Esophagus muscularis mucosa (tissue), 4 donors: ENCODE measurements at regions of chr2 and their contacts with region 1.

Region 1: DNA sequence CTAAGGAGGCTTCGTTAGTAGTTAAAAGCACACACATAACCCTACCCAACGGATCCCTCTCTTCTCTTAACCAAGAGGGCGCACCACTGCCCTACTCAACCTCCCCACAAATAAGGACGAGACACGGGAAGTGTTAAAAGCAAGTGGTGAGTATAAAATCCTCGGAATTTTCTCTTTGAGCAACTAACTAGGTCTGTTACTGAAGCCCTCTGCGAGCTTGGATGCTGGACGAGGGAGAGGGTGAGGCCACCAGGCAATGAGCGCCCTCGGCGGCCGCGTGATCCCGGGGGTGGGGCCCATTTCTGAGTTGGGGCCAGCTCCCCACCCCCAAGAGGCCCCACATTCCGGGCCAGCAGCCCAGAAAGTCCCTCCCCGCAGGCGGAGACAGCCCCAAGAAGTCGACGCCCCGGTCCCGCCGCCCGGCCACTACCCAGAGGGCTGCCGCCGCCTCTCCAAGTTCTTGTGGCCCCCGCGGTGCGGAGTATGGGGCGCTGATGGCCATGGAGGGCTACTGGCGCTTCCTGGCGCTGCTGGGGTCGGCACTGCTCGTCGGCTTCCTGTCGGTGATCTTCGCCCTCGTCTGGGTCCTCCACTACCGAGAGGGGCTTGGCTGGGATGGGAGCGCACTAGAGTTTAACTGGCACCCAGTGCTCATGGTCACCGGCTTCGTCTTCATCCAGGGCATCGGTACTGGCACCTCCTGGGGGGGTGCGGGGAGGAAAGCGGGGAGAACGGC is at the start of gene CYBRD1:
- DNase-seq: peak; percentile 95
- H3K4me3 ChIP-seq: peak within 1 kb of the TSS; percentile 84 to 98 (median 93)
- H3K27ac ChIP-seq: peak within 1 kb of the TSS; percentile 88 to 94 (median 92)
- H3K4me1 ChIP-seq: peaks cover 12 to 43% (median 29%) of the 10 kb centered on the region in 4 donors
- H3K27me3 ChIP-seq: no peaks in the 10 kb centered on the region
- CTCF ChIP-seq: no peak
- EP300 ChIP-seq: no peak
- POLR2A ChIP-seq: peak; percentile 60
- total RNA-seq, gene CYBRD1: 133 to 281 (median 197) TPM

Region 2: DNA sequence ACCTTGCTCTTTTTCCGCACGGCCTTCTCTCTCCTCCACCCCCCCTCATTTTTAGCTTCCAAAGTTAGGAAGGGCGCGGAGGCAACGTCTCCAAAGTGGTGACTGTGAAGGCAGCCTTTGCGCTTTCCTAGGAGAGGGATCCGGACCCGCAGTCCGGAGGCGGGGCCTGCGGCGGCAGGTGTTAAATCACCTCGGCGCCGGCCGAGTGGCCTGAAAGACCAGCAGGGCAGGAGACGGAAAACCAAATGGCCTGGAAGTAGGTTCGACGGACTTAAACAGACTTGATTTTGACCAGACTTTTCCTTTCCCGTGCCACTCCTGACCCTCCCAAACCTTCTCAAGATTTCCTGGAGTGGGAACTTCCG is 592.6 kb before region 1 on chr2:
- intact Hi-C with region 1: loop called (anchors 5 kb)
- DNase-seq: peak; percentile 92
- H3K4me3 ChIP-seq: peak overlapping the region; percentile 67 to 93 (median 90)
- H3K27ac ChIP-seq: peak overlapping the region; percentile 94 to 97 (median 95)
- H3K4me1 ChIP-seq: peaks cover 22 to 39% (median 38%) of the 10 kb centered on the region in 4 donors
- H3K27me3 ChIP-seq: no peaks in the 10 kb centered on the region
- CTCF ChIP-seq: no peak
- EP300 ChIP-seq: no peak
- POLR2A ChIP-seq: no peak

Region 3: GRCh38 chr2:171433763-171434670 is 88.2 kb before region 1 on chr2 and contains the starts of genes DCAF17 and METTL8:
- intact Hi-C with region 1: loop called (anchors 2 kb)
- DNase-seq: peak; percentile 97
- H3K4me3 ChIP-seq: peak within 1 kb of the TSS; percentile 69 to 87 (median 76)
- H3K27ac ChIP-seq: peak within 1 kb of the TSS; percentile 93 to 98 (median 94)
- H3K4me1 ChIP-seq: peaks cover 10 to 49% (median 40%) of the 10 kb centered on the region in 4 donors
- H3K27me3 ChIP-seq: no peaks in the 10 kb centered on the region
- CTCF ChIP-seq: peak; percentile 8 to 30 (median 21)
- EP300 ChIP-seq: no peak
- POLR2A ChIP-seq: peak; percentile 14
- total RNA-seq, gene DCAF17: 12.0 to 22.8 (median 14.3) TPM
- total RNA-seq, gene METTL8: 22.1 to 43.3 (median 31.5) TPM

Region 4: DNA sequence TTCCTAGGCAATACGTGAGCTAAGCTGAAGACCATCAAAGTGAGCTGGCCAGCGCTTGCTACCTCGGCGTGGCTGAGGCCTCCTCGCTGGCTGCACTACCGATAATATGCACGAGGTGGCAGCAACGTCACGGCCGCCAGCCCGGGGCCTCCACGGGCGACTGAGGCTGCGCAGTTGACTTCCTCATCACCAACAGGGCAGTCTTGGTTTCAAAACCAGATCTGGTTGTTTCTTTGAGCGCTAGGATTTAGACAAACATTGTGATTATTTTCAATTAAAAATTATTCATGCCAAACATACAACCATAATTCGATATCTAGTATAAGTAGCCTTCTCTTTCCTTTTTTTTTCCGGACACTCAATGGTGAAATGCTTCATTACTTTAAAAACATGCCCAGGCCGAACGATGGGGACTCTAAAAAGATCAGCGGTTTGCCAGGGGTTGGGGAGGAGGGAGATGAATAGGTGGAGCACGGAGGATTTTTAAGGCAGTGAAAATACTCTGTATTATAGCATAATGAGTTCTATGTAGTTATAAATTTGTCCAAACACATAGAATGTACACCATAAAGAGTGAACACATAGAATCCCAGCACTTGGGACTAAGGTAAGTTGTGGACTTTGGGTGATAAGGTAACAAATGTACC is 52.1 kb after region 1 on chr2:
- intact Hi-C with region 1: no loop called
- DNase-seq: peak; percentile 93
- H3K4me3 ChIP-seq: no peak overlapping the region
- H3K27ac ChIP-seq: no peak overlapping the region
- H3K4me1 ChIP-seq: no peaks in the 10 kb centered on the region
- H3K27me3 ChIP-seq: peaks cover 0 to 9% (median 0%) of the 10 kb centered on the region in 4 donors
- CTCF ChIP-seq: peak in 2 of 3 experiments; percentile 97 to 98
- EP300 ChIP-seq: no peak
- POLR2A ChIP-seq: no peak

Region 5: GRCh38 chr2:171798252-171798741 is 276.1 kb after region 1 on chr2:
- intact Hi-C with region 1: no loop called
- DNase-seq: no peak
- H3K4me3 ChIP-seq: no peak overlapping the region
- H3K27ac ChIP-seq: no peak overlapping the region
- H3K4me1 ChIP-seq: no peaks in the 10 kb centered on the region
- H3K27me3 ChIP-seq: no peaks in the 10 kb centered on the region
- CTCF ChIP-seq: no peak
- EP300 ChIP-seq: no peak
- POLR2A ChIP-seq: no peak

Region 6: DNA sequence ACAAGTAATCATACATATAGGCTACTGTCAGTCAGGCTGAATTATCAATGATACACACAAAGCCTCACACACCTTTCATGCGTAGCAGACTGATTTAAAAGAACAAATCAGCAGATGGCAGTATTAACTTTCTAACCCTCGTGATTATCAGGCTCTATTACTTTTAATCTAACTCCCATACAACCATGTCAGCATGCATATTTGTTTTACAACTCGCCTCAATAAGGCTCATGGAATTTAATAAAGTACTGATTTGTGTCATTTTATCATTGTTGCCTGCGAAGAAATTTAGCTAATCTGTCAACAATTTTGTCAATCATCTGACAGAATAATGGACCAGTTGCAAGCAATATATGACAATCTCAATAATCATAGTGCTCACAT is 289.0 kb after region 1 on chr2:
- intact Hi-C with region 1: no loop called
- DNase-seq: no peak
- H3K4me3 ChIP-seq: no peak overlapping the region
- H3K27ac ChIP-seq: no peak overlapping the region
- H3K4me1 ChIP-seq: peaks cover 0 to 24% (median 17%) of the 10 kb centered on the region in 4 donors
- H3K27me3 ChIP-seq: no peaks in the 10 kb centered on the region
- CTCF ChIP-seq: peak in 2 of 3 experiments; percentile 39 to 44
- EP300 ChIP-seq: no peak
- POLR2A ChIP-seq: no peak